Sciatic nerve (tissue), 2 donors: ENCODE measurements at regions of chr2 and their contacts with region 1.

Region 1: GRCh38 chr2:192070099-192070498 is 124.6 kb downstream of the TMEFF2 start:
- DNase-seq: no peak
- ATAC-seq: no peak

Region 2: GRCh38 chr2:192053921-192054320 is 16.2 kb before region 1 on chr2:
- intact Hi-C with region 1: no loop called
- DNase-seq: no peak
- ATAC-seq: no peak

Region 3: GRCh38 chr2:192885569-192886160 is 815.6 kb after region 1 on chr2:
- intact Hi-C with region 1: loop called (anchors 5 kb)
- DNase-seq: no peak
- ATAC-seq: no peak